ENCODE measurements at regions of chr13 and their contacts with region 1.

Region 1: DNA sequence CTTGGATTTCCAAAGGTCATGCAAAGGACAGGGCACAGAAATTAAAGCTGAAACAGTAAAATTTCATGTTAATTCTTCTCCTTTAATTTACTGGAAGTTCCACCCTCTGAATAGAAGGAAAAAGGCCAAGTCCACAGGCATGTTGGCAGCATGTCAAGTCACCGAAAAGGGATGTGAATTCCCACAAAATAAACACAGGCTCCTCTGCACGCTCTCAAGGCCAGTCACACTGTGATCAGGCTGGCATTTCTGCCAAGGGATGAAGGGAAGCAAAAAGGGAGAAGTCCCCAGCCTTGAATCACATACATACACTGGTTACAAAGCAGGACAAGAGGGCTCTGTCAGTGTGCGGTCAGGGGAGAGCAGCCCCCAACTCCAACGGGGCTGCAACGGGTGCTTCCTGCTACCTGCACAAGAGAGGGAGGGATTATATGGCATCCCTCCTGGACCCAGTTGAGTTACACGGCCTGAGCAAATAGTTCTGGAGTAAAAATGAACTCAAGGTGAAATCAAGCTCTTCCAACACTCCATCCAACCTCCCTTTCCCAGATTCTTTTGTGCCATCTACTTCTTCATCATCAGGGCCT is 6.9 kb downstream of the DCLK1 start:
- DNase-seq: peak; percentile 55 to 82 (median 71)
- H3K4me3 ChIP-seq: no peak overlapping the region
- H3K27ac ChIP-seq: peak overlapping the region in 1 of 2 donors; percentile 35
- H3K4me1 ChIP-seq: peaks cover 7% of the 10 kb centered on the region
- H3K27me3 ChIP-seq: no peaks in the 10 kb centered on the region
- CTCF ChIP-seq: no peak
- EP300 ChIP-seq: no peak
- POLR2A ChIP-seq: no peak

Region 2: DNA sequence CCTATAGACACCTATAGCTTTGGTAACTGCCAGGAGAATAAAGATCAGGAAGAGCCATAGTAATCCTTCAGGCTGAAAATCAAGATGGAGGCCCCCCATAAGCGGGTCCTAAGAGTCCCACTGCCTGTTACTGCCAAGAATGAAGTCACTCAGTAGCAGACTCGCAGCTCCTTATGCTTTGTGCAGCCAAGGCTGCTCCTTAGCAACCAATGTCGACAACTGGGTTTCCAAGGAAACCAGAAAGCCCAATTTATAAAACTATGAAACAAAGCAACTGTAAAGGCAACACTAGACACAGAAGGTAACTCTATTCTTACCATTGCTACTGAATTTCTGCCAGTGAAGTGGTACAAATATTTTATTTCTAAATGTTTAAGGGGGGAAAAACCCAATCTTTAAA is 49.7 kb before region 1 on chr13:
- intact Hi-C with region 1: loop called in 1 of 4 experiments (anchors 10 kb)
- DNase-seq: peak in 1 of 5 donors; percentile 20
- H3K4me3 ChIP-seq: no peak overlapping the region
- H3K27ac ChIP-seq: no peak overlapping the region
- H3K4me1 ChIP-seq: no peaks in the 10 kb centered on the region
- H3K27me3 ChIP-seq: no peaks in the 10 kb centered on the region
- CTCF ChIP-seq: no peak
- EP300 ChIP-seq: no peak
- POLR2A ChIP-seq: no peak

Measured in ovary (tissue), 10 donors.